ENCODE measurements at regions of chrX and their contacts with region 1.

Region 1: DNA sequence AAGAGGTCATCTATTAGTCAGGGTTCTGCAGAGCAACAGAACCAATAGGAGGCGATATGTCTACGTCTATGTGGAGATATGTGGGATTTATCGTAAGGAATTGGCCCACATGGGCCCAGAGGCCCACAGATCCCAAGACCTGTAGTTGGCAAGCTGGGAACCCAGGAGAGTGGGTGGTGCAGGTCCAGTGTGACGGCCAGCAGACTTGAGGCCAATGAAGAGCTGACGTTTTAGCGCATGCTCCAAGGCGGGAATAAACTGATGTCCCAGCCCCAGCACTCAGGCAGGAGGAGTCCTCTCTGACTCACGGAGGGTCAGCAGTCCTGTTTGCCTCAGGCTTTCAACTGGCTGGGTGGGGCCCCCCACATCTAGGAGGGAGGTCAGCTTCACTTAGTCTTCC is 21.3 kb downstream of the SPACA5 start:
- DNase-seq: no peak
- H3K4me3 ChIP-seq: no peak overlapping the region
- H3K27ac ChIP-seq: no peak overlapping the region
- H3K4me1 ChIP-seq: peaks cover 0 to 2% of the 10 kb centered on the region in 2 experiments; a peak in 1 of 4 replicates
- H3K27me3 ChIP-seq: no peaks in the 10 kb centered on the region; the same call in 1 of the 2 replicates
- CTCF ChIP-seq: no peak
- EP300 ChIP-seq: no peak
- RAD21 ChIP-seq: no peak

Region 2: DNA sequence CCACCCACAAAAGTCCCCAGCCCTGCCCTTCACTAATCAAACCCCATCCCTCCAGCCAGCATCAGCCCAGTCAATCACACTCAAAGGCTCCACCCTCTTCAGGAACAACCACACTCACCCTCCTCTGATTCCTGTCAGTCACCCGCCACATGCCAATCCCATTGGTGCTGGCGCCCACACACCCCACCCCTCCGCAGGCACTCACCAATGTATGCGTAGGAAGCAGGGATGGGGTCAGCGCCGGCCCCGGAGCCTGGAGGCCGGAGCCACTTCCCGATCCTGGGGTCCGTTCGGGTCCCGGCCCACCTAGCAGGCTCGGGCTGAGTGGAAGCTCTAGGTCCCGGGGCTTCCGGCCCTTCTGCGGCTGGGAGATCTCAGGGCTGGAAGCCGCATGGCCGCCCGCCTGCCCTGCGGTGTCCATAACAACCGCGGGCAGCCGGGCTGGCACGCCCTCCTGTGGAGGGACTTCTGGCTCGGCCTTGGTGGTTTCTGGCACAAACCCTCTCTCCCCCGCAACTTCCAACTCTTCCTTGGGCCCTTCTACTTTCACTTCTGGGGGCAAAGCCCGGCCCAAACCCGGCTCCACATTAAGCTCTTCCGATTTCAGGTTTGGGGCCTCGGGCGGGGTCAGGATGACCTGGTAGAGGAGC is 390.4 kb before region 1 on chrX:
- CTCF ChIA-PET with region 1: no interaction called
- POLR2A ChIA-PET with region 1: no interaction called
- DNase-seq: no peak
- H3K4me3 ChIP-seq: peak overlapping the region in 1 of 2 experiments; percentile 15; a peak in 1 of 4 replicates
- H3K27ac ChIP-seq: no peak overlapping the region
- H3K4me1 ChIP-seq: no peaks in the 10 kb centered on the region
- H3K27me3 ChIP-seq: no peaks in the 10 kb centered on the region; the same call in 1 of the 2 replicates
- CTCF ChIP-seq: no peak
- EP300 ChIP-seq: no peak
- RAD21 ChIP-seq: no peak

Region 3: DNA sequence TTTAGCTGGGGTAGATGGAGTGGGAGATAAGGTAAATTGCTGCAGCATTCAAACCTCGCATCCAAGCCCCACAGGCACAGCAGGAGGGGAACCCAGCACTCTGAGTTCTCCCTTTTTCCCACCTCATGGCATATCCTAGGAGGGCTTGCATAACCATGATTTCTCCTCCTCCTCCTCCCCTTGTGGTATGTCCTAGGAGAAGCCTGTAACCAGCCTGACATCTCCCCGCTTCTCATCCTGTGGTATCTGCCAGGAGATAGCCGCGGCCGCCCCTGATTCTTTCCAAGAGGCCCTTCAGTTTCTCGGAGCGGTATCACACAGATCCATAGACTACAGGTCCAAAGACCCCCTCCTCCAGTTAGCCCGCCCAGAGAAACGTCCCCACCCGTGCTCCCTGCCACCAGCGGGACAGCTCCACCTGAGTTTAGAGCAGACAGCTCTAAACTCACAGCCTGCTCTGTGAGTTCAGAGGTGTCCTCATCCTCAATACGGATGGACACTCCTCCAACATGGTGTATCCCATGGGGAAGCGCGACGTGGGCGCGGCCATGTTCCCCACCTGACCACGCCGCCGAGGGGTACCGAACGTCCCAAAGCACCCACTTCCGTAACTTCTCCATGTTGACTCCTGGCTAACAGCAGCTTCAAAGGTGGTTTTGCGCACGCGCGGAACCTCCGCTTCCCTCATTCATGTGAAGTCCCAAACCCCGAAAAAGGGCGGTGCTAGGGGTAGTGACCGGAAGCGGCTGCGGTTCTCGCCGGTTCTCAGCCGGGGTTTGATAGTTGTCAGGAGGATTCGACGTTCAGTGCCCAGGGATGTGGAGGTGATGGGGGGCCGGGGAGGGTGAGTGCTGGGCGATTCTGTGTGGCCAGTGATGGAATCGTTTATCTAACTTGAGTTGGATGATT is 191.7 kb before region 1 on chrX and contains the start of gene ZNF81:
- CTCF ChIA-PET with region 1: interaction called, 24 read pairs
- POLR2A ChIA-PET with region 1: interaction called, 3 read pairs
- DNase-seq: peak; percentile 86
- H3K4me3 ChIP-seq: peak within 1 kb of the TSS; percentile 75 to 90
- H3K27ac ChIP-seq: peak within 1 kb of the TSS; percentile 60 to 85; a peak in 3 of 4 replicates
- H3K4me1 ChIP-seq: peaks cover 0 to 9% of the 10 kb centered on the region in 2 experiments; a peak in 3 of 4 replicates
- H3K27me3 ChIP-seq: no peaks in the 10 kb centered on the region
- CTCF ChIP-seq: 0 out of 2 replicates have a peak, but pooled peaks have one; percentile 7
- EP300 ChIP-seq: no peak
- RAD21 ChIP-seq: no peak
- polyA plus RNA-seq, gene ZNF81: 3.5 and 6.0 TPM in 2 replicates

Region 4: DNA sequence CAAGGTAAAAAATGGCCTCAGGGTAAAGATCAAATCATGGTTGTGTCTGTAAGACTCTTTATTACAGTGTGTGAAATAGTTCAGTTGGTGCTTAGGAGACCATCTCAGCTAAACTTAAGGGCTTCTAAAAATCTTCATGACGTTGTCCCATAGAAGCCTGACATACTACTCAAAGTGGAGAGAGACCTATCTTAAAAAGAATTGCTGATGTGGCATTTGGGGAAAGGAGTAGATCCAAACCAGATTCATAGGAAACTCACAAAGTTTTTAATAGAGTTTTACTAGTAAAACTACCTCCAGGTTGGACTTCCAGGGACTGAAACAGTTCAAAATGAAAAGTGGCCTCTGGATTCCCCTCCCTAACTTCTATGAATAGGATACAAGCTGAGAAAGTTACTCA is 109.8 kb before region 1 on chrX:
- CTCF ChIA-PET with region 1: no interaction called
- POLR2A ChIA-PET with region 1: no interaction called
- DNase-seq: no peak
- H3K4me3 ChIP-seq: no peak overlapping the region
- H3K27ac ChIP-seq: no peak overlapping the region
- H3K4me1 ChIP-seq: no peaks in the 10 kb centered on the region
- H3K27me3 ChIP-seq: no peaks in the 10 kb centered on the region
- CTCF ChIP-seq: no peak
- EP300 ChIP-seq: no peak
- RAD21 ChIP-seq: no peak

Region 5: DNA sequence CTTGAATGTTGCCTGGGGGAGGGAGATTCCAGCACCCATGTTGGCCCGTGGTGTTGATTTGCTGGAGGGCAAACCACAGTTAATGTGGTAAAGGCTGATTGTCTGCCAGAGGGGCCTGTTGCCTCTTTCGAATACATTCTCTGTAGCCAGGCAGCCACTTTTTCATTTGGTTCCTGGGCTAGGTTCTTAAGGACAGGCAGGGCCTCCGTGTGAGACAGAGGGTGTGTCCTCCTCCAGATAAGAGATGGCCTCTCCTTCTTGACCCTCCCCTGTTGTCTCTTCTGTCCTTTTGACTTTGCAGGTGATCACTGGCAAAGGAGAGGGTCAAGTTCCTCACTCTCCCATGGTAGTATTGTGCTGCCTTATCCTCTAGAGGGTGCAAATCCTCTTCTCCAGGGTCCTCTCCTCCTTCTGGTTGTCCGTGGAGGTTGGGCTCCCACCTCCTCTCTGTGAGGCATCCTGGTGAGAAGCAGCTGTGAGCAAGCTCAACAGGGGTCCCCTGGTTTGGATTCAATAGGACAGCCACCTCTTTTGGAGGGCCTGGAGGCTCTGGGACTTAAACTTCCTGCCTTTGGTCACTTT is 69.2 kb before region 1 on chrX:
- CTCF ChIA-PET with region 1: interaction called, 10 read pairs
- POLR2A ChIA-PET with region 1: no interaction called
- DNase-seq: peak; percentile 36
- H3K4me3 ChIP-seq: no peak overlapping the region
- H3K27ac ChIP-seq: no peak overlapping the region
- H3K4me1 ChIP-seq: no peaks in the 10 kb centered on the region
- H3K27me3 ChIP-seq: no peaks in the 10 kb centered on the region; the same call in 1 of the 2 replicates
- CTCF ChIP-seq: no peak; the same call in 1 of the 2 replicates
- EP300 ChIP-seq: no peak
- RAD21 ChIP-seq: peak; percentile 47

Region 6: DNA sequence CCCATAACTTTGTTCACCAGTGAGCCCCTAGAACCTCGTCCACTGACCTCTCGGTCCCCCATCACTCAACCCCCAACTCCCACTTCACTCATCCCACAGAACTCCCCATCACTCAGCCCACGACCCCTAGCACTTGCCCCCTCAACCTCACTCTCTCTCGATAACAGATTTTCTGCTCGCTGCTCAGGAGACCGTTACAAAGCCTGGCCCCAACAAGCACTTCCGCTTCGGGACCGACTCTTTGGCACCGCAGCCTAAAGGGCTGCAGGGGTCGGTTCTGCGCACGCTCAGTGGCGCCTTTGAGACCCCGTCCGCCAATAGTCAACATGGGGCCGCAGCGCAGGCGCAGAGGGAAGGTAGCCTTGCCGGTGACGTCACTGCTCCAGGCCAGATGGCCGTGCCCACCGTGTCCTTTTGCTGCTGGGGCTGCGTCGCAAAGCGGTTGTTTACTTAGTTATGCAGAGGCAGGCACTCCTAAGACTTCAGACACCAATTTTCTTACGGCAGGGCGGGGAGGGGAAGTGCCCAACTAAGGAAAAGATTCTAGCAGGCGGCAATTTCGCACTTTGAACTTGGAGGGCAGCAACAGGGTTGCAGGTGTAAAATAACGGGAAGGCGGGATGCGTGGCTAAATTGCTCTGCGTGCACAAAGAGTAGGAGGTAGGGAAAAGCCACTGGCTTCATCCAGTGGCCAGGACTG is 24.2 kb before region 1 on chrX and contains the start of gene ZNF182:
- CTCF ChIA-PET with region 1: no interaction called
- POLR2A ChIA-PET with region 1: no interaction called
- DNase-seq: peak; percentile 98
- H3K4me3 ChIP-seq: peak within 1 kb of the TSS; percentile 77
- H3K27ac ChIP-seq: peak within 1 kb of the TSS; percentile 31 to 77; a peak in 3 of 4 replicates
- H3K4me1 ChIP-seq: peaks cover 0 to 7% of the 10 kb centered on the region in 2 experiments; a peak in 2 of 4 replicates
- H3K27me3 ChIP-seq: no peaks in the 10 kb centered on the region
- CTCF ChIP-seq: no peak
- EP300 ChIP-seq: no peak
- RAD21 ChIP-seq: no peak
- polyA plus RNA-seq, gene ZNF182: 2.1 and 2.6 TPM in 2 replicates

Region 7: DNA sequence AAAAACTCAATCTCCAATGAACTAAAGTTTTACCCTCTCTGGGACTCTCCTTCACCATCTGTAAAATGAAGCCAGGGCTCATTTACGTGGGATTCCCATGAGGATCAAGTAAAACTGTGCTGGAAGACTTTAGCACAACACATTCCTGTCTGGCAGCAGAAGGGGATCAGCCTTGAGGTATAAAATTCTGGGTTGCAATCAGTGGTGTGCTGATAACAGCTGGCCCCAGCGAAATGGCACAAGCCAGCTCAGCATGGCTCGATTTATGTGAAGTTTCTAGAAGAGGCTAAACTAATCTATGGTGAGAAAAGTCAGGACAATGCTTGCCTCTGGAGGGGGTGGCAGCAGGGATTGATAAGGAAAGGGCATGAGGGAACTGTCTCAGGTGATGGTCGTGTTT is 15.0 kb after region 1 on chrX:
- CTCF ChIA-PET with region 1: interaction called, 14 read pairs
- POLR2A ChIA-PET with region 1: no interaction called
- DNase-seq: no peak
- H3K4me3 ChIP-seq: no peak overlapping the region
- H3K27ac ChIP-seq: no peak overlapping the region
- H3K4me1 ChIP-seq: no peaks in the 10 kb centered on the region; a peak in 1 of 4 replicates
- H3K27me3 ChIP-seq: no peaks in the 10 kb centered on the region; the same call in 1 of the 2 replicates
- CTCF ChIP-seq: no peak
- EP300 ChIP-seq: no peak
- RAD21 ChIP-seq: no peak

Region 8: GRCh38 chrX:48153769-48154168 is 125.7 kb after region 1 on chrX:
- CTCF ChIA-PET with region 1: no interaction called
- POLR2A ChIA-PET with region 1: no interaction called
- DNase-seq: no peak
- H3K4me3 ChIP-seq: no peak overlapping the region
- H3K27ac ChIP-seq: no peak overlapping the region
- H3K4me1 ChIP-seq: no peaks in the 10 kb centered on the region
- H3K27me3 ChIP-seq: peaks cover 40% of the 10 kb centered on the region; the same call in 1 of the 2 replicates
- CTCF ChIP-seq: no peak
- EP300 ChIP-seq: no peak
- RAD21 ChIP-seq: no peak